GM12878 (cell line): ENCODE measurements at regions of chr22 and their contacts with region 1.

Region 1: DNA sequence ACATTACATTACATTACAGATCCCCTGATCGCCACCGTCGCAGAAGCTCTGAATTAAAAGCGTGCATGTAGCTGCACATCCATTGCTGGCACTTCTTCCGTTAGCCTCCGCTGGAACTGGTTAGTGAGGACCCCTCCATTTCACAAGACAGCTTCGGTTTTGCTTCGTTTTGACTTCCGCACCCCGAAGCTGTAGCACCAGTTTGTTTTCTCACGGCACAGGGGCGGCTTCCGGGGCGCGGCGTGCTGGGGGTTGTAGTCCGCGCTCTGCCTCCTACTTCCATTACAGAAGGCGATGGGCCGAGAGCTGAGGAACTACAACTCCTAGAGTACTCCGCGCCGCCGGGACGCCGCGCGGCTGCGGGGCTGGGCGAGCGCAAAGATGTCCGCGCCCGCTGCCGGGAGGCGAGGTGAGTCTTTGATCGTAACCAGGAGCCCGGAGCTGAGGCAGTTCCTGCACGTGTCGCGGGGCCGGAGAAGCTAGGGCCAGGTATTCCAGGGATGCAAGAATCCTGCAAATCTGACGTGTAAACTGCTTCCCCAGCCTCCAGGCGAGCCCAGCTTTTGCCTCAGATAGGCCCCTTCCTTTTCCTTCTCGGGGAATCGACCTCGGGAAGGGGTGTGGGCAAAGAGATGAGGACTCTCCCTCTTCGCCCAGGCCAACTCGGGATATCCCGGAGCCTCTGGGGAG is at the start of gene PEX26:
- DNase-seq: peak; percentile 84
- ATAC-seq: peak; percentile 96
- H3K4me3 ChIP-seq: peak within 1 kb of the TSS; percentile 92
- H3K27ac ChIP-seq: peak within 1 kb of the TSS; percentile 94
- H3K4me1 ChIP-seq: no peaks in the 10 kb centered on the region
- H3K27me3 ChIP-seq: no peaks in the 10 kb centered on the region
- CTCF ChIP-seq: no peak
- EP300 ChIP-seq: no peak
- POLR2A ChIP-seq: peak; percentile 90
- RAD21 ChIP-seq: no peak
- polyA plus RNA-seq, gene PEX26: 0.79 to 1.1 TPM

Region 2: GRCh38 chr22:17451316-17451715 is 626.5 kb before region 1 on chr22:
- CTCF ChIA-PET with region 1: no interaction called
- POLR2A ChIA-PET with region 1: no interaction called
- RAD21 ChIA-PET with region 1: no interaction called
- SMC1A ChIA-PET with region 1: no interaction called
- in situ Hi-C with region 1: no loop called
- intact Hi-C with region 1: no loop called
- DNase-seq: no peak
- ATAC-seq: peak; percentile 49; the same call in 2 of the 3 replicates
- H3K4me3 ChIP-seq: no peak overlapping the region
- H3K27ac ChIP-seq: no peak overlapping the region
- H3K4me1 ChIP-seq: no peaks in the 10 kb centered on the region
- H3K27me3 ChIP-seq: no peaks in the 10 kb centered on the region
- CTCF ChIP-seq: no peak
- EP300 ChIP-seq: no peak
- POLR2A ChIP-seq: no peak
- RAD21 ChIP-seq: no peak

Region 3: GRCh38 chr22:17554814-17555213 is 523.0 kb before region 1 on chr22:
- CTCF ChIA-PET with region 1: interaction called, 14 read pairs
- POLR2A ChIA-PET with region 1: no interaction called
- RAD21 ChIA-PET with region 1: interaction called, 8 read pairs
- SMC1A ChIA-PET with region 1: interaction called, 7 read pairs
- in situ Hi-C with region 1: no loop called
- intact Hi-C with region 1: loop called (anchors 5 kb)
- DNase-seq: no peak
- ATAC-seq: no peak
- H3K4me3 ChIP-seq: no peak overlapping the region
- H3K27ac ChIP-seq: no peak overlapping the region
- H3K4me1 ChIP-seq: no peaks in the 10 kb centered on the region
- H3K27me3 ChIP-seq: no peaks in the 10 kb centered on the region; a peak in 1 of 4 replicates
- CTCF ChIP-seq: no peak
- EP300 ChIP-seq: no peak
- POLR2A ChIP-seq: no peak
- RAD21 ChIP-seq: no peak

Region 4: DNA sequence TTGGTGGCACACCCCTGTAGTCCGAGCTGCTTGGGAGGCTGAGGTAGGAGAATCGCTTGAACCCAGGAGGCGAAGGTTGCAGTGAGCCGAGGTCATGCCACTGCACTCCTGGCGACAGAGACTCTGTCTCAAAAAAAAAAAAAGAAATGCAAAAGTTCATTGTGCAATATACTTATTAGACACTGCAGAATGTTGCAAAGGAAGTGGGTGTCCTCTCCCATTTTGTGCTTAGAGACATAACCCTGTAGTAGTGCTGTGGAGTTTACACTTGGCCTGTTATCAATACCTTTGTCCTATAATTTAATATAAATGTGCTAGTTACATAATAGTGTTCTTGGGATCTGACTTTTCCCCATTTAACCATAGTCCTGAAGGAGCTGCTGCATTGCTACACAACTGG is 429.8 kb before region 1 on chr22:
- CTCF ChIA-PET with region 1: no interaction called
- POLR2A ChIA-PET with region 1: no interaction called
- RAD21 ChIA-PET with region 1: no interaction called
- SMC1A ChIA-PET with region 1: no interaction called
- in situ Hi-C with region 1: no loop called
- intact Hi-C with region 1: no loop called
- DNase-seq: no peak
- ATAC-seq: no peak
- H3K4me3 ChIP-seq: no peak overlapping the region
- H3K27ac ChIP-seq: no peak overlapping the region
- H3K4me1 ChIP-seq: no peaks in the 10 kb centered on the region
- H3K27me3 ChIP-seq: no peaks in the 10 kb centered on the region
- CTCF ChIP-seq: no peak
- EP300 ChIP-seq: no peak
- POLR2A ChIP-seq: no peak
- RAD21 ChIP-seq: no peak

Region 5: DNA sequence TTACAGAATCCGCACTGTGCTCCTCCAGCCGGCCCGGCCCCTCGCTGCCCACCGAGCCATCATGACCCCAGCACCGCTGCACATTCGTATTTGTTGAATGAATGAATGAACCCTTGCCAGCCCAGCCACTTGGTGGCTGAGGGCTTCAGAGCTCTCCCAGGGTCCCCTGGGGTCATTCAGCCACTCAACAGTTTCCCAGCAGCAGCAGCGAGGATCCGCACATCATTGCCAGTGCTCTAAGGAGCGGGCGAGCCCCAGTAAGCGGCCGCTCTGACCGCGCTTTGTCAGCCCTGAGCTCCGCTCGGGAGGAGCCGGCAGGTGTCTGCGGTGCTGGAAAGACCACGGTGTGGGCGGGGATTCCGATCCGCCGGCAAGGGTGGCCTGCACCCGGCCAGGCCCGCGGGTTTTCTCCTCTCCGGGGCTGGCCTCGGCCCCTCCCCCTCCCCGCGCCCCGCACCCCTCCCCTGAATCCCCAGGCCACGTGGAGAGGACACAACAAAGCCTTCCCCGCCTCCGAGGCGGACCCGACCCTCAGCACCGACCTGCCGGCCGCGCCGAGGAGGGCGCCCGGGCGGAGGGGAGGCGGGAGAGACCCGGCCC is 304.1 kb before region 1 on chr22:
- CTCF ChIA-PET with region 1: interaction called, 6 read pairs
- POLR2A ChIA-PET with region 1: no interaction called
- RAD21 ChIA-PET with region 1: interaction called, 12 read pairs
- SMC1A ChIA-PET with region 1: interaction called, 6 read pairs
- in situ Hi-C with region 1: no loop called
- intact Hi-C with region 1: no loop called
- DNase-seq: no peak
- ATAC-seq: peak; percentile 49
- H3K4me3 ChIP-seq: peak overlapping the region; percentile 83
- H3K27ac ChIP-seq: peak overlapping the region; percentile 69
- H3K4me1 ChIP-seq: peaks cover 46% of the 10 kb centered on the region
- H3K27me3 ChIP-seq: no peaks in the 10 kb centered on the region
- CTCF ChIP-seq: no peak
- EP300 ChIP-seq: no peak
- POLR2A ChIP-seq: no peak; the same call in none of the 2 replicates
- RAD21 ChIP-seq: no peak

Region 6: DNA sequence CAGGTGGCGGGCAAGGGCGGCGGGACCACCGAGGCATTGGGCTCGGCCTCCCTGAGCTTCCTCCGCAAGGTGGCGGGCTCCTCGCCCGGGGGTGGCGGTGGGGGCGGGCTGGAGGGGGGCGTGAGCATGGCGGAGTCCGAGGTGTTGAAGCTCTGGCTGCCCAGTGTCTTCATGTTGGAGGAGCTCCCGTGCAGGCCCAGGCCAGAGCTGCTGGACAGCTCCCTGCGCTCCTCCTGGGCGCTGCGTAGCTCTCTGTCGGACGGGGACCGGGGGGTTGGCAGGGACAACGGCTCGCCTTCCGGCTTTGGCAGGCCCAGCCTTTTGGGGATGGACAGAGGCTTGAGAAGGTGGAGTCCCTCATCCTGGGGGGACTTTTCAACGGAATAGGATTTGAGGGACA is 259.6 kb before region 1 on chr22:
- CTCF ChIA-PET with region 1: no interaction called
- POLR2A ChIA-PET with region 1: no interaction called
- RAD21 ChIA-PET with region 1: no interaction called
- SMC1A ChIA-PET with region 1: no interaction called
- in situ Hi-C with region 1: no loop called
- intact Hi-C with region 1: no loop called
- DNase-seq: no peak
- ATAC-seq: no peak
- H3K4me3 ChIP-seq: no peak overlapping the region
- H3K27ac ChIP-seq: no peak overlapping the region
- H3K4me1 ChIP-seq: no peaks in the 10 kb centered on the region
- H3K27me3 ChIP-seq: no peaks in the 10 kb centered on the region
- CTCF ChIP-seq: no peak
- EP300 ChIP-seq: no peak
- POLR2A ChIP-seq: no peak
- RAD21 ChIP-seq: no peak

Region 7: DNA sequence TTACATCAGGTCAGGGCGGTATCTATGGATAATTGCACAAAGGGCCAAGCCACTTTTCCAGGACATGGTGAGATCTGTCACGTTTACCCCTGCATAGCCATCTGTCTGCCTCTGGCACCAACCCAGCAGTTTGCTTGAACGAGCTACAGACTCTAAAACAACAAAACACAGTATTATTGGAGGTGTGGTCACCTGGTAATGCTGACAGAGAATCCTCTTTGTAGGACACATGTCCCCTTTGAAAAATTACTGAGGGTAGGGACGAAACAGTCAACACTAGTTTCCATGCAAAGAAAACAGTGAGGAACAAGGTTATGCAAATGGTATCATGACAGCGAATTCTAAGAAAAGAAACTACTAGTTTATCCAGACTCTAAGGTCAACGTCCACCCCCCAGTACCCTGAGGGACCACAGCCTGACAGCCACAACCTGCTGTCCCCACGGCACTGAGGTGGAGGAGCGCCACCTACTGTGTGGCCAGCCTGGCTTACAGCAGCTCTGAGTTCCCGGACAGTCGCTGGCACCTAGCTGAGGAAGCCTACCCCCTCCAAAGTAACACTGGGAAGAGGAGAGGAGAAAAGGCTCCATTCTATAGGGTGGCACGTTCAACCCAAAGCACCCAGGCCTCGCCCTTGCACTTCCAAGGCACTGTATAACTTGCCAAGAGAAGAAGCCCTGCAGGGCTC is 186.2 kb before region 1 on chr22:
- CTCF ChIA-PET with region 1: interaction called, 14 read pairs
- POLR2A ChIA-PET with region 1: no interaction called
- RAD21 ChIA-PET with region 1: interaction called, 5 read pairs
- SMC1A ChIA-PET with region 1: interaction called, 9 read pairs
- in situ Hi-C with region 1: no loop called
- intact Hi-C with region 1: loop called (anchors 5 kb)
- DNase-seq: no peak
- ATAC-seq: peak; percentile 62; the same call in 2 of the 3 replicates
- H3K4me3 ChIP-seq: no peak overlapping the region
- H3K27ac ChIP-seq: no peak overlapping the region
- H3K4me1 ChIP-seq: no peaks in the 10 kb centered on the region
- H3K27me3 ChIP-seq: no peaks in the 10 kb centered on the region
- CTCF ChIP-seq: peak; percentile 27 to 42 (median 36); a peak in 4 of 6 replicates
- EP300 ChIP-seq: no peak
- POLR2A ChIP-seq: no peak
- RAD21 ChIP-seq: peak; percentile 30

Region 8: DNA sequence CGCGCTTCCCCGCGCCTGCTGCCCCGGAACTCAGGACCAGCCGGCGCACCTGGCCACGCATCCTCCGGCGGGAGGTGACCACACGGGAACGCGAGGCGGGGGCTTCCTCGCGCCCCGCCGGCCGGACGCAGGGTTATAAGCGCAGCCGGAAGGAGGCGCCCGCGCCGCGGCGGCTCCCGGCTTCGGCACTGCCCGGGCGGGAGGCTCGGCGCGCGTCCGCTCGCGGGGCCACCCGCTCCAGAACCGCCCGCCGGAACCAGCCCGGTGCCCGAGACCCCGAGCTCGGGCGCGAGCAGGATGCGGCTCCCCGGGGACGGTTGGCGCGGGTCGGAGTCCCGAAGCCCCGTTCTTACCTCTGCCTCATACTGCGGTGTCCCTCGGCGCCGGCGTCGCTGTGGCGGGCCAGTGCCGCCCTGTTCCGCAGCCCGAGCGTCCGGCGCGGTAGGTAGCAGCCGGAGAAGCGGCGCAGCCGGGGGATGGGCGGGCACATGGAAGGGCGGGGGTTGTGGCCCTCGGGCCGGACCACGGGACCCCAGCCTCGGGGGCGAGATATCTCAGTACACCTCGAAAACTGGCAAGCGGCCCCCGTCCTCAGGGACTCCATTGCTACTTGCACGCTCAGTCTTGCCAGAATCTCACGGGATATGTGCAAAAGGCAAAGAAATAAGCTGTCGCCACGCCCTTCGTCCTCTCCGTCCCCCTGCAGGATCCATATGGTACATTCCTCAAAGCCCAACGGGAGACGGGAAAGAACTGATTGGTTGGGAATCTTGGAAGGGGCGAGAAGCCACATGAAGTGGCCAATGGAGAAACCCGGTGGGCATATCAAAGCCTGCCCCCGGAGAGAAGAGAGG is 76.5 kb before region 1 on chr22:
- CTCF ChIA-PET with region 1: interaction called, 58 read pairs
- POLR2A ChIA-PET with region 1: interaction called, 4 read pairs
- RAD21 ChIA-PET with region 1: interaction called, 39 read pairs
- SMC1A ChIA-PET with region 1: interaction called, 59 read pairs
- in situ Hi-C with region 1: no loop called
- intact Hi-C with region 1: loop called (anchors 1 kb)
- DNase-seq: peak; percentile 75
- ATAC-seq: peak; percentile 86
- H3K4me3 ChIP-seq: peak overlapping the region; percentile 78
- H3K27ac ChIP-seq: peak overlapping the region; percentile 87
- H3K4me1 ChIP-seq: peaks cover 32% of the 10 kb centered on the region
- H3K27me3 ChIP-seq: no peaks in the 10 kb centered on the region
- CTCF ChIP-seq: peak; percentile 40 to 58 (median 47); a peak in 5 of 6 replicates
- EP300 ChIP-seq: no peak
- POLR2A ChIP-seq: peak; percentile 94
- RAD21 ChIP-seq: peak; percentile 52

Region 9: GRCh38 chr22:18091916-18092526 is 14.2 kb after region 1 on chr22:
- CTCF ChIA-PET with region 1: interaction called, 22 read pairs
- POLR2A ChIA-PET with region 1: interaction called, 4 read pairs
- RAD21 ChIA-PET with region 1: interaction called, 32 read pairs
- SMC1A ChIA-PET with region 1: interaction called, 69 read pairs
- in situ Hi-C with region 1: no loop called
- intact Hi-C with region 1: no loop called
- DNase-seq: no peak
- ATAC-seq: peak; percentile 64
- H3K4me3 ChIP-seq: peak overlapping the region; percentile 47; the same call in 1 of the 2 replicates
- H3K27ac ChIP-seq: peak overlapping the region; percentile 90
- H3K4me1 ChIP-seq: peaks cover 53% of the 10 kb centered on the region
- H3K27me3 ChIP-seq: no peaks in the 10 kb centered on the region
- CTCF ChIP-seq: no peak
- EP300 ChIP-seq: no peak
- POLR2A ChIP-seq: peak; percentile 54; the same call in 1 of the 2 replicates
- RAD21 ChIP-seq: no peak